A673 (cell line): ENCODE measurements at regions of chr11 and their contacts with region 1.

Region 1: DNA sequence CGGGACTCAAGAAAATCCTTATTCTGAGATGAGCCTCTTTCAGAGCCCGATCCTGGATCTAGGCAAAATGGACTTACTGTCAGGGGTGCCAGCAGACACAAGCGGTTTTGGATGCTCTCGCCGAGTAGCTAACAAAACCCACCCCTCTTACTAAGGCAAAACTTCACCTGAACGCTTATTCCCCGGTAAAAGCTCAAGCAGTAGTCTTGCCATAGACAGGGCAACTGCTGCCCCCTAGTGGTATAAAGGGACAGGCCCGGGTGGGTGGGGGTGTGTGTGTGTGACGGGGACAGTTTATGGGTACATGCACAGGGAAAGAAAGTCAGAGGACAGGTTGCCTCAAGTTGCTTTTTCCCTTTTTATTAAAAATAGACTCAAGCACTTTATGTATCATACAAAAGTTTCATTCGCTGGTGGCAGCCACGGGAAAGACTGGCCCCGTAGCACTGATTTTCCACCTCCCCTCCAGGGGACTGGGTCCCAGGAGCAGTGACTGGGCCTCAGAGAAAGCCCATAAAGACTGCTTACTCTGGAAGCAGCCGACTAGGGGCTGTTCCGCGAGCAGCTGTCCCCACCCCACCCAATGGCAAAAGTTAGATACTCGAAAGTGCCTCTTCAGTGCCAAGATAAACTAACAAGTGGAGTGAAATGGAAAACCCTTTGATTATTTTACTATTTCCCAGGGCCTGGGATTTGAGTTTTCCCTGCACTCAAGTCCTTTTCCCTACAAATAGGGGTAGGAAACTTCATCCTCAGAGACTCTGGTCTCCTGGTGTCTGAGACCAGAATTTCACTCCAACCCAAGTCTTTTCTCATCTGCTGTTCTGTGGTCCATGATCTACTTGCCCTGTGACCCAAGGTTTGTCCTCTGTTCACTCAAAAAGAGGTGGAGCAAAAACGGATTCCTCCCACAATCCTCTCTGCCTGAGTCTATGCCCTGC is 4.7 kb downstream of the YPEL4 start:
- DNase-seq: peak; percentile 89
- H3K4me3 ChIP-seq: no peak overlapping the region
- H3K27ac ChIP-seq: no peak overlapping the region
- H3K4me1 ChIP-seq: peaks cover 64% of the 10 kb centered on the region
- H3K27me3 ChIP-seq: peaks cover 19% of the 10 kb centered on the region
- CTCF ChIP-seq: peak; percentile 99

Region 2: GRCh38 chr11:57001674-57002401 is 643.2 kb before region 1 on chr11:
- CTCF ChIA-PET with region 1: no interaction called
- POLR2A ChIA-PET with region 1: no interaction called
- intact Hi-C with region 1: no loop called
- DNase-seq: peak; percentile 5
- H3K4me3 ChIP-seq: no peak overlapping the region
- H3K27ac ChIP-seq: no peak overlapping the region
- H3K4me1 ChIP-seq: no peaks in the 10 kb centered on the region
- H3K27me3 ChIP-seq: no peaks in the 10 kb centered on the region
- CTCF ChIP-seq: peak; percentile 52

Region 3: DNA sequence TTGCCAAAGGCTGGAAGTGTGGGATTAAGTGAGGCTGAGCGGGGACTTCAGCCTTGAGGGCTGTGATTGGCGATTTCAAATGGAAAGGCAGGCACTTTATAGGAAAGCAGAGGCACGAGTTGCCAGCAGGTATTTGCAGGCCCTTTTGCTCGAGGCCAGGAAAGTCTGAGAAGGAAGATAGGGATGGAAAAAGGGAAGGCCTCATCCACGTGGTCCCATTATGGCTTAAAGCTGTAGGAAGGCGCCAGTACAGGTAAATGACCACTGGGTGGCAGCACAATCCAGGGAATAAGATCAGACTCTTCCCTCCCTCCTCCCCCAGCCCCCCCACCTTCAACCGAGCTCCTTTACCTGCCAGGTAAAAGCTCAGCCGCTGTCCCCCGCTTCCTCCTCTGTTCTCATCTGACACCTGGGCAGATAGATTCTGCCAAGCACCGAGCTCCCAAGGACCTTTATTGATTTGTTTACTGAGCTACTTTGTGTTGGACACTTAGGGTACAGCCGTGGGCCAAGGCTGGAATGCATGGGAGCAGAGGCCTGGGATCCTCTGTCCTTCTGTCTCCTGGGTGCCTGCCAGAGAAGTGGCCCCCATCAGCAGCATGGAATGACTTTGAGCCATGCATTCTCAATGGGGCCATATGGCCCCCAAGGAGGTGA is 299.3 kb before region 1 on chr11:
- CTCF ChIA-PET with region 1: interaction called, 9 read pairs
- POLR2A ChIA-PET with region 1: no interaction called
- intact Hi-C with region 1: loop called (anchors 1 kb)
- DNase-seq: peak; percentile 82
- H3K4me3 ChIP-seq: no peak overlapping the region
- H3K27ac ChIP-seq: no peak overlapping the region
- H3K4me1 ChIP-seq: no peaks in the 10 kb centered on the region
- H3K27me3 ChIP-seq: no peaks in the 10 kb centered on the region
- CTCF ChIP-seq: peak; percentile 84

Region 4: DNA sequence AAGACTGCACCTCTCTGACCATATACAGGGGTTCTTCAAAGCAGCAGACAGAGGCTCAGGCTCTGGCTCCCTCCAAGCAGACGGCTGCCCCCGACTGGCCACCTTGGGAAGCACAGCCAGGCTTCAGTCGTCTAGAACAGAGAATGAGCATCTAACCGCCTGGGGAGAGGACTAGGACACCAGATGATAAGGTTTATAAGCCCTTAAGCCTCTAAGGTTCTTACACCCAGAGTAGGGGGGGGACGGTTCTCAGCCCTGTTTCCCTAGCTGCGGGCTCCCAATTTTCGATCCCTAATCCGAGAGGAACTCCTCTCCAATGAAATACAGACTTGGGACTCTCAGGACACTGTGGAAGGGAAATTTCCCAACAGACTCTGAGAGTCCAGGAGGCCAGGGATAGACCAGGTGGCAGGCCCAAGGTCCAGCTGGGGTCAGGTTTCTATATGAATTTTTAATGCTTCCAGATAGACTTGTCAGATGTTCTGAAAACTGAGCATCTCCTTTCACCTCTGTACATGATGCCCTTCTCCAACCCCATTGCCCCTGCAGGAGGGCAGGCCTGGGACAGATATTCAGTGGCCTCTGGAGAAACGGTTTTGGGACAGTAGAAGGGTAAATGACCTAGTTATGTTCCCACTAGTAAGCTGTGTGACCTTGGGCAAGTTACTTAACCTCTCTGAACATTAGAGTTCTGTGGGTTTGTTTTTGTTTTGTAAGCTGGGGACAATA is 164.4 kb before region 1 on chr11:
- CTCF ChIA-PET with region 1: interaction called, 13 read pairs
- POLR2A ChIA-PET with region 1: no interaction called
- intact Hi-C with region 1: no loop called
- DNase-seq: peak; percentile 87
- H3K4me3 ChIP-seq: no peak overlapping the region
- H3K27ac ChIP-seq: no peak overlapping the region
- H3K4me1 ChIP-seq: peaks cover 16% of the 10 kb centered on the region
- H3K27me3 ChIP-seq: peaks cover 4% of the 10 kb centered on the region
- CTCF ChIP-seq: peak; percentile 96

Region 5: DNA sequence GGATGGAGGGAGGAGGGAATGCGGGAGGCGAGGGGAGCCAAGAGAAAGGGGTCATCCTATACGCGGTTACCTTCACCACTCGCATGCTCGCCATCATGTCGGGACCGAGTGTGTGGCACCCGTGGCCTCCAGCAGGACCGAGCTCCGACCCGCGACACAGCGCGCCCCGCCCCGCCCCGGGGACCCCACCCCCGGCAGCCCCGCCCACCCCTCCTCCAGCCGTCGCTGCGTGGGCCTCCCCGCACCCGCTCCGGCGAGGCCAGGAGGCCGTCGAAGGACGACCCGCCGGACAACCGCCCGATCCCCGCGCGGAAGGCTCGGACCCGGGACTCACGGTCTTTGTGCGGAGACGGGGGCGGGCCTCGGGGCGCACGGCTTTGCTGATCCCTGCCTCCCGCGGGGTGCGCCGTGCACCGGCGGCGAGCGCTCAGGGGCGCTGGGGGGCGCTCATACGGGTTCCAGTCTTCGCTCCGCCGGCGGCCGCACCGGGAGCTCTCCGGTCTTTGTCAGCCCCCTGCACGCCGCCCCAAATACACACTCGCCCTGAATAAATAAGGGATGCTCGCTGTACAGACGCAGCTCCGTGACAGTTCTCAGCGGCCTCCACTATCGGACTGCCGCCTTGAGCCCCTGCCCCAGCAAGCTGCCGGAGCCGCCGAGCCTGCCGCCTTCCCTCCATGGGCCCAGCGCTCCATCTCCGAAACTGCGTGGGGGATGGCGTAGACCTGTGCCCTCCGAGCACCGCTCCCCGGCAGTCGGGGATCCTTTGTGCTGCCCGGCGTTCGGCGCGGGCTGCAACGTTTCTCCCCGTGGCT is 77.3 kb before region 1 on chr11 and contains the start of gene UBE2L6:
- CTCF ChIA-PET with region 1: interaction called, 50 read pairs
- POLR2A ChIA-PET with region 1: interaction called, 11 read pairs
- intact Hi-C with region 1: loop called (anchors 1 kb)
- DNase-seq: peak; percentile 68
- H3K4me3 ChIP-seq: peak within 1 kb of the TSS; percentile 68
- H3K27ac ChIP-seq: peak within 1 kb of the TSS; percentile 68
- H3K4me1 ChIP-seq: no peaks in the 10 kb centered on the region
- H3K27me3 ChIP-seq: no peaks in the 10 kb centered on the region
- CTCF ChIP-seq: peak; percentile 98
- total RNA-seq, gene UBE2L6: 30.4 and 38.8 TPM in 2 replicates

Region 6: GRCh38 chr11:57667736-57668435 is 22.9 kb after region 1 on chr11 and contains the start of gene ZDHHC5:
- CTCF ChIA-PET with region 1: interaction called, 10 read pairs
- POLR2A ChIA-PET with region 1: no interaction called
- intact Hi-C with region 1: no loop called
- DNase-seq: peak; percentile 100
- H3K4me3 ChIP-seq: peak within 1 kb of the TSS; percentile 70
- H3K27ac ChIP-seq: peak within 1 kb of the TSS; percentile 97
- H3K4me1 ChIP-seq: peaks cover 10% of the 10 kb centered on the region
- H3K27me3 ChIP-seq: no peaks in the 10 kb centered on the region
- CTCF ChIP-seq: peak; percentile 46
- total RNA-seq, gene ZDHHC5: 72.9 and 76.9 TPM in 2 replicates

Region 7: DNA sequence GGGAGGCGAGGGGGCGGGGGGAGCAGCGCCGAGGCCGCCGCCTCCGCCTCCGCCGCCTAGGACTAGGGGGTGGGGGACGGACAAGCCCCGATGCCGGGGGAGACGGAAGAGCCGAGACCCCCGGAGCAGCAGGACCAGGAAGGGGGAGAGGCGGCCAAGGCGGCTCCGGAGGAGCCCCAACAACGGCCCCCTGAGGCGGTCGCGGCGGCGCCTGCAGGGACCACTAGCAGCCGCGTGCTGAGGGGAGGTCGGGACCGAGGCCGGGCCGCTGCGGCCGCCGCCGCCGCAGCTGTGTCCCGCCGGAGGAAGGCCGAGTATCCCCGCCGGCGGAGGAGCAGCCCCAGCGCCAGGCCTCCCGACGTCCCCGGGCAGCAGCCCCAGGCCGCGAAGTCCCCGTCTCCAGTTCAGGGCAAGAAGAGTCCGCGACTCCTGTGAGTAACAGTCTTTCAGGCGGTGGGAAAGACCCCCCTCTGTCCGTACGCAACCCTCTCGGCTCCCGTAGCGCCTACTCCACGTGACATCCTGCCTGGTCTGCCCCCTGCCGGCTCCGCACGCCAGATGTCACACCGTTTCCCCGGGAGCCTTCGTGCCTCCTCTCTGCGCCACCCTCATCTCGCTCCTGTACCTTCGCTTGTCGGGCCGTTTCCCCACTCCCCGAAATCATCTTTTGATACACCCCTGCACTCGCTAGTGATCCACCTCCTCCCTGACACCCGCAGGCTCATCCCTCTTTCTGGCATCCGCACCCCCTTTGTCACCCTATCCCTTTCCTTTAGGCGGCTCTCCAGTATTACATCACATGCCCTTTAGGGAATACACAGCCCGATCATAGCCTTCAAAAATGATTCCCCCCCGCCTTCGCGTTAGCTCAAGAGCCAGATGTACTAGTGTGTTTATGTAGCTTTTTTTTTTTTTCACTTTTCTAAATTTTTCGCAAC is 934.4 kb after region 1 on chr11:
- CTCF ChIA-PET with region 1: no interaction called
- POLR2A ChIA-PET with region 1: no interaction called
- intact Hi-C with region 1: loop called (anchors 10 kb)
- DNase-seq: peak; percentile 97
- H3K4me3 ChIP-seq: peak overlapping the region; percentile 67
- H3K27ac ChIP-seq: peak overlapping the region; percentile 100
- H3K4me1 ChIP-seq: peaks cover 22% of the 10 kb centered on the region
- H3K27me3 ChIP-seq: no peaks in the 10 kb centered on the region
- CTCF ChIP-seq: peak; percentile 78